ENCODE measurements at regions of chr2 and their contacts with region 1.

Region 1: DNA sequence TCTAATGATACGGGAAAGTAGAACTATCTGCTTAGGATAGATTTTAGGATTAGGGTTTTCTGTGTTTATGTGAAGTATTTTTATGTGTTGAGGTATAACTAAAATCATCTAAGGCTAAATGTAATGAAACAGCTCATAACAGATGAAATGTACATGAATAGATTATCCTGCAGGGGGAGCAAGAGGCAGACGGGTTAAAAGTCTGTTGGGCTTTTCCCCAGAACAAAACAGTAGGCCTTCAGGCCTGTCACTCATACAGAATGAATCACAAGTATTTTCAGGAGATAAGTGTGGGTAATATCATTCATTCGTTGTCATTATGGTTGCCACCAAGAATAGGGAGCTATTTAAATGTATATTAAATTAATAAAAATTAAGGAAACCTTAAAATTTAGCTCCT is 107.9 kb upstream of the IL1R2 start:
- DNase-seq: no peak
- H3K4me3 Mint-ChIP-seq: no peak overlapping the region
- H3K27ac Mint-ChIP-seq: peak overlapping the region; percentile 24
- H3K4me1 Mint-ChIP-seq: peaks cover 11% of the 10 kb centered on the region
- H3K27me3 Mint-ChIP-seq: no peaks in the 10 kb centered on the region

Region 2: DNA sequence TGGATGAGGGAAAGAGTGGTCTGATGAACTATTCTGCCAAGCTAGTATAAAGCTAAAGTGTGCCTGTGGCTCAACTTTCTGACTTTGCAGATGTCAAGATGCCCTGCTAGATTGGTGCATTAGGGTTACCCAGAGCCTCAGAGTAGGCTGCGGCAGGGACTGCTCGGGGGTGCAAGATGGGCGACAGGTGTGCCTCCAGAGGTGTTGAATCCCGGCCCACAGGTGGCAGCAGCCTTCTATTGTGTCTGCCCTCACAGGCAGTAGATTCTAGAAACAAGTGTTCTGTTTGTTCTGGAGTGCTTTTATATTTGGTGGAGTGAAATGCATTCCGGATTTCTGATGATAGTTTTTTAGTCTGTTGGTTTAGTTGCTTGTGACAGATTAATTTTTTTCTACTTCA is 23.7 kb before region 1 on chr2:
- intact Hi-C with region 1: no loop called
- DNase-seq: no peak
- H3K4me3 Mint-ChIP-seq: no peak overlapping the region
- H3K27ac Mint-ChIP-seq: no peak overlapping the region
- H3K4me1 Mint-ChIP-seq: peaks cover 4% of the 10 kb centered on the region
- H3K27me3 Mint-ChIP-seq: no peaks in the 10 kb centered on the region

Region 3: GRCh38 chr2:101900375-101900774 is 16.5 kb after region 1 on chr2:
- intact Hi-C with region 1: loop called (anchors 2 kb)
- DNase-seq: no peak
- H3K4me3 Mint-ChIP-seq: no peak overlapping the region
- H3K27ac Mint-ChIP-seq: no peak overlapping the region
- H3K4me1 Mint-ChIP-seq: peaks cover 11% of the 10 kb centered on the region
- H3K27me3 Mint-ChIP-seq: no peaks in the 10 kb centered on the region

Region 4: GRCh38 chr2:102114290-102114721 is 230.4 kb after region 1 on chr2:
- intact Hi-C with region 1: loop called (anchors 10 kb)
- DNase-seq: no peak
- H3K4me3 Mint-ChIP-seq: no peak overlapping the region
- H3K27ac Mint-ChIP-seq: no peak overlapping the region
- H3K4me1 Mint-ChIP-seq: peaks cover 25% of the 10 kb centered on the region
- H3K27me3 Mint-ChIP-seq: peaks cover 43% of the 10 kb centered on the region

Region 5: DNA sequence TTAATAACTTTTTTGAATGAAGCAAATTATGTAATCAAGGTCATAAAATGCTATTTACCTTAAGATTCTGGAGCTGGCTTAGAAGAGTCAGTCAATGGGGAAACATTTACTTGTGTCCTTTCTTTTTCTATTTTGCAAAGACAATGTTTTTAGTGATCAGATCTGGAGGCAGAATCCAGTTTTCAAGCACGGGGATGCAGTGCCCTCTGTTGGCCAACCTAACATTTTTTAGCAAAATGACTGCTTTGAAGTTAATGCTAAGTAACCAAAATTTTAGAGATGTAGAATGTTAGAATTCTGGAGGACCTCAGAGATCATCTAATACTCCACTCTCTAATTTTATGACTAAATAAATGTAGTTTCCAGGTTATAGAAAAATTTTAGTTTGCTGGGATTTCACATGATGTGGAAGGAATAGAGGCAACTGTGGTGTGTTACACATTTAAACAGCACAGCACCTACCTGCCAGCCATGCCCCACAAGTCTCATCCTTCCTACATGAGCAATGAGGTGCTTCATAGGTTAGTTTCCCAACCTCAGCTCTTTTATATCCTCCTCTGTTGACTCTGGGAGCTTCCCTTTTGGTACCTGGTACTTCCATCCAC is 565.6 kb after region 1 on chr2:
- intact Hi-C with region 1: loop called (anchors 2 kb)
- DNase-seq: peak; percentile 50
- H3K4me3 Mint-ChIP-seq: no peak overlapping the region
- H3K27ac Mint-ChIP-seq: no peak overlapping the region
- H3K4me1 Mint-ChIP-seq: peaks cover 8% of the 10 kb centered on the region
- H3K27me3 Mint-ChIP-seq: no peaks in the 10 kb centered on the region